ENCODE measurements at regions of chr5 and their contacts with region 1.

Region 1: DNA sequence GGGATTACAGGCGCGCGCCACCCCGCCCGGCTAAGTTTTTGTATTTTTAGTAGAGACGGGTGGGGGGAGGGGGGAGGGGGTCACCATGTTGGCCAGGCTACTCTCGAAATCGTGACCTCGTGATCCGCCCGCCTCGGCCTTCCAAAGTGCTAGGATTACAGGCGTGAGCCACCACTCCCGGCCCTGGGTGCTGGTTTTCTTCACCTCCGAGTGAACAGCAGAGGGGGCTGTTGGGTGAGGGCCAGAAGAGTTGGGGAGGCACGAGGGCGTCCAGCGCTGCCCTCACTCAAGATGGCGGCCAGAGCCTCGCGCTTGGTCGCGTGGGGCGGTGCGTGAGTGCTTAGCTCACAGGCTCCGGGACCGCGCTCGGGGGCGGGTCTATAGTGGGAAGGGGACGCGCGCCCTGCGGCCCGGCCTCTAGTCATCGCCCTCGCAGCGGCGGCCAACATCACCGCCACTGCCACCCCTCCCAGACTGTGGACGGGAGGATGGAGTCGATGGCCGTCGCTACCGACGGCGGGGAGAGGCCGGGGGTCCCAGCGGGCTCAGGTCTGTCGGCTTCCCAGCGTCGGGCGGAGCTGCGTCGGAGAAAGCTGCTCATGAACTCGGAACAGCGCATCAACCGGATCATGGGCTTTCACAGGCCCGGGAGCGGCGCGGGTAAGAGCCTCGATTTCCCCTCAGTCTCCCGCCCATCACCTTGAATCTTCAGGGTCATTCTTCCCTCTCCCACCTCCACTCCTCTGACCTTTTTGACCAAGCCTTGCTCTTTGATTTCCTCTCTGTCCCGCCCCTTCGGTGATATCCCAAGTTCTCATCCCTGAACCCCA is at the start of gene CAMLG:
- DNase-seq: peak; percentile 99
- H3K4me3 ChIP-seq: peak within 1 kb of the TSS; percentile 68 to 90 (median 74)
- H3K27ac ChIP-seq: peak within 1 kb of the TSS; percentile 91 to 95 (median 94)
- H3K4me1 ChIP-seq: peaks cover 0 to 24% (median 18%) of the 10 kb centered on the region in 4 donors
- H3K27me3 ChIP-seq: no peaks in the 10 kb centered on the region
- CTCF ChIP-seq: peak in 1 of 4 experiments; percentile 23
- EP300 ChIP-seq: peak in 1 of 4 donors; percentile 22
- POLR2A ChIP-seq: peak; percentile 90 to 95
- total RNA-seq, gene CAMLG: 60.5 to 81.3 (median 65.1) TPM

Region 2: GRCh38 chr5:134758504-134759341 is 20.4 kb after region 1 on chr5 and contains the start of gene DDX46:
- intact Hi-C with region 1: loop called (anchors 1 kb)
- DNase-seq: peak; percentile 96
- H3K4me3 ChIP-seq: peak within 1 kb of the TSS; percentile 58 to 89 (median 72)
- H3K27ac ChIP-seq: peak within 1 kb of the TSS; percentile 76 to 81 (median 80)
- H3K4me1 ChIP-seq: peaks cover 0 to 26% (median 23%) of the 10 kb centered on the region in 4 donors
- H3K27me3 ChIP-seq: no peaks in the 10 kb centered on the region
- CTCF ChIP-seq: peak; percentile 10 to 66 (median 41)
- EP300 ChIP-seq: no peak
- POLR2A ChIP-seq: peak; percentile 54 to 62
- total RNA-seq, gene DDX46: 35.0 to 53.6 (median 41.9) TPM

Region 3: DNA sequence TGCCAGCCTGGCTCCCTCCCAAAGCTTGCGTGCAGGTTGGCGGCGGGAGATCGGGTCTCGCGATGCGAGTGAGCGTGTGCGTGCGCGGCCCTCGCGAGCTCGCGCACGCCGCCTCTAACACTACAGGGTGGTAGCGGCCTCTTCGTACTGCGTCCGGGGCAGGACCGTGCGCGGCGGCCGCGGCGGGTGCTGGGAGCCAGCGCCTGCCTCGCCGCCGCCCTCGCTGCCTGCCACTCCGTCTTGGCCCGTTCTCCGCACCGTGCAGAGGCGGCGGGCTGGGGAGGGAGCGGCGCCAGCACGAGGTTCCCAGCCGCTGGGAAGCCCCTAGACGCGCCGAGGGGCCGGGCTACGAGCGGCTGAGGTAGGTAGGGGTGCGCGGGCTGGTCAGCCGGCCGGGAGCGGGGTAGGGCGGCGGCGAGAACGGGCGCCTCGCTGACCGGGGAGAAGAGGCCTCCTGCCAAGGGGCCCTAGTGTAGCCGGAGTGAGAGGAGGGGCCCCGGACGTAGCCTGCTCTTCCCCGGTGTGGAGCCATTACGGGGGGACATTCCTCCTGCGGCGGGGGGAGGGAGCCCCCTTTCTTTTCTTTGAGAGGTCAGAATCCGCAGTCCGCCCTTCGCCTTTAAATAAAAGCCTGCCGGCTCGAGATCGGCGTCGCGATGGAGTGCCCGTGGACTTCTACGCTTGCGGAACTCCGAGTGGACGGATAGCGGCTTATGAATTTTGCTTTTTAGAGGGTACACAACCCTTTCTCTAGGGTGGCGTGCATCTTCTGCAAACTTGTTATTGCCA is 107.7 kb after region 1 on chr5 and contains the start of gene C5orf24:
- intact Hi-C with region 1: loop called (anchors 5 kb)
- DNase-seq: peak; percentile 98
- H3K4me3 ChIP-seq: peak within 1 kb of the TSS; percentile 82 to 99 (median 86)
- H3K27ac ChIP-seq: peak within 1 kb of the TSS; percentile 94 to 100 (median 97)
- H3K4me1 ChIP-seq: peaks cover 0 to 44% (median 30%) of the 10 kb centered on the region in 4 donors
- H3K27me3 ChIP-seq: no peaks in the 10 kb centered on the region
- CTCF ChIP-seq: no peak
- EP300 ChIP-seq: peak in 1 of 4 donors; percentile 8
- POLR2A ChIP-seq: peak; percentile 58 to 65
- total RNA-seq, gene C5orf24: 38.0 to 82.0 (median 70.8) TPM

Measured in sigmoid colon (tissue), 7 donors.